ENCODE measurements at regions of chr1 and their contacts with region 1.

Region 1: GRCh38 chr1:52127181-52128180 is 14.4 kb upstream of the ZFYVE9 start:
- DNase-seq: peak in 3 of 10 donors; percentile 16 to 34 (median 19)
- H3K4me3 ChIP-seq: no peak overlapping the region
- H3K27ac ChIP-seq: no peak overlapping the region
- H3K27me3 ChIP-seq: no peaks in the 10 kb centered on the region
- CTCF ChIP-seq: peak; percentile 20 to 84 (median 65)

Region 2: GRCh38 chr1:51990478-51990965 is 137.0 kb before region 1 on chr1 and contains the start of gene RAB3B:
- intact Hi-C with region 1: no loop called
- DNase-seq: peak in 8 of 10 donors; percentile 4 to 60 (median 40)
- H3K4me3 ChIP-seq: peak within 1 kb of the TSS; percentile 12 to 69 (median 51)
- H3K27ac ChIP-seq: no peak within 1 kb of the TSS
- H3K27me3 ChIP-seq: peaks cover 0 to 51% (median 33%) of the 10 kb centered on the region in 45 donors
- CTCF ChIP-seq: no peak
- total RNA-seq, gene RAB3B: 2.2 to 28.2 (median 10.1) TPM

Region 3: DNA sequence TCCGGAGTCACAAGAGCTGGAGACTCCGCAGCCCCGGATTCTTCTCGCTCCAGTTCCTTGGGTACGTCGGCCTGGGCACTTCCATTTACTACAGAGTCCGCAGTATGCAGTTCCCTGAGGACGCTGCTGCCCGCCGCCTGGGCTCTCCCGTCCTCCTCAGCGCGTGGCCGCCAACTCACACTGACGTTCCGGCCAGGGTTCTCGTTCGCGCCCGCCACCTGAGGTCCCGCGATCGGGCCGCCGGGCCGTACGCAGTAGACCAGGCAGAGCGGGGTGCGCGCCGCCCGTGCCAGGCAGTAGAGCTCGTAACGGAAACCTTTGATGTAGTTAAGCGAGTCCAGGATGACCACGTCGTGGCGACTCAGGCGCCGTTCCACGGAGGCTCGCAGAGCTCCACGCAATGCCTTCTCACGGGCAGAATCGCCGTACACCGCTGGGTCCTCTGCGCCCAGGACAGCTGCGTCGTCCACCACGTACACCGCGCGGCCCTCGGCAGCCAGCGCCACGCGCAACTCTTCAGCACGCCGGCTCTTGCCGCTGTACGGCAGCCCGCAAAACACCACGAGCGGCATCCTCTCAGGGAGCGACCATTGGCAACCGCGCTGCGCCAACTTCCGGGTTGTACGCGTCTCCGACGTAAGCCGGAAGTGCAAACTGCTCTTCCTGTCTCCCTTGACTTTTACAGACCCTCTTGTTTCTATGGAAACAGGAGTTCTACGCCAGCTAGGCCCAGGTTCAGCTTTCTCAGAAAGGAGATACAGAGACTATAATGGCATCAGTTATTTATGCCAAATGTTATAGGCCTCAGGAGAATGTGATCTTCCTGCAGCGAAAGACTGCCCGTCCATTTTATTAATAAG is 94.1 kb before region 1 on chr1 and contains the start of gene KTI12:
- intact Hi-C with region 1: no loop called
- DNase-seq: peak; percentile 68 to 91 (median 88)
- H3K4me3 ChIP-seq: peak within 1 kb of the TSS; percentile 50 to 96 (median 84)
- H3K27ac ChIP-seq: peak within 1 kb of the TSS; percentile 48 to 95 (median 84)
- H3K27me3 ChIP-seq: no peaks in the 10 kb centered on the region
- CTCF ChIP-seq: peak in 14 of 56 donors; percentile 2 to 32 (median 19)
- total RNA-seq, gene KTI12: 3.7 to 10.5 (median 6.4) TPM

Region 4: DNA sequence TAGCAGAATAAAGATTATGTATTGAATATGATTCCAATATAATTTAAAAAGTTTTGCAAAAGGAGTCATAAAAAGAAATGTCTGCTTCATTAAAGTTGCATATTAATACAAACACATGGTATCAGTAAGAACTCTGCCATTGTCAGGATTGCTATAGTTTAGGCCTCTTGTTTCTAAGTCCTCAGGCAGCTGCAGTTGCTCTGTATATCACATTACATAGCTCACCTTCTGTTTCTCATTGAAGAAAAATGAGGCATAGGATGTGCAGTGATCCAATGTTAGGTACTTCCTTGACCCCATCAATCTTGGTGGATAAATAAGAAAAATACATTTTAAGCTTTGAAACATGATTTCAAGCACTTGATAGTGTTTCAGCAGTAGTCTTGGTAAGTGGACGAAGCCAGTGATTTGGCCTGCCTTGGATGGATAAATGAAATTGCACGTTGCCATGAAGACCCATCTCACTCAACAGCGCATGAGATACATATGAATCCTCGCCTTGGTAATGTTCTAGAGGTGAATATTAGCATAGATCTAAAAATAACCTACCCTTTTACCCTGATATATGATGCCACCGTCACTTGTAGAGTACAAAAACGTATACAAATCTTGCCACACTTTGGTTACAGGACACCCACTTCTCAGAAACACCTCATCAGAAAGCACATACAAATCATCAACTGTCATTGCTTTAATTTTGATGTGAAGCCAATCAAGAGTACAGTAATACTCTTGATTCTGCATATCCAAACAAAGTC is 39.7 kb after region 1 on chr1:
- intact Hi-C with region 1: no loop called
- DNase-seq: no peak
- H3K4me3 ChIP-seq: no peak overlapping the region
- H3K27ac ChIP-seq: no peak overlapping the region
- H3K27me3 ChIP-seq: no peaks in the 10 kb centered on the region
- CTCF ChIP-seq: no peak

Region 5: GRCh38 chr1:52296345-52296744 is 168.9 kb after region 1 on chr1:
- intact Hi-C with region 1: loop called in 1 of 2 experiments (anchors 5 kb)
- DNase-seq: no peak
- H3K4me3 ChIP-seq: no peak overlapping the region
- H3K27ac ChIP-seq: no peak overlapping the region
- H3K27me3 ChIP-seq: no peaks in the 10 kb centered on the region
- CTCF ChIP-seq: peak; percentile 43 to 80 (median 65)

Region 6: GRCh38 chr1:52686830-52687229 is 559.3 kb after region 1 on chr1:
- intact Hi-C with region 1: loop called in 1 of 2 experiments (anchors 5 kb)
- DNase-seq: no peak
- H3K4me3 ChIP-seq: no peak overlapping the region
- H3K27ac ChIP-seq: peak overlapping the region in 1 of 59 donors; percentile 32
- H3K27me3 ChIP-seq: no peaks in the 10 kb centered on the region
- CTCF ChIP-seq: no peak